ENCODE measurements at regions of chr14 and their contacts with region 1.

Region 1: DNA sequence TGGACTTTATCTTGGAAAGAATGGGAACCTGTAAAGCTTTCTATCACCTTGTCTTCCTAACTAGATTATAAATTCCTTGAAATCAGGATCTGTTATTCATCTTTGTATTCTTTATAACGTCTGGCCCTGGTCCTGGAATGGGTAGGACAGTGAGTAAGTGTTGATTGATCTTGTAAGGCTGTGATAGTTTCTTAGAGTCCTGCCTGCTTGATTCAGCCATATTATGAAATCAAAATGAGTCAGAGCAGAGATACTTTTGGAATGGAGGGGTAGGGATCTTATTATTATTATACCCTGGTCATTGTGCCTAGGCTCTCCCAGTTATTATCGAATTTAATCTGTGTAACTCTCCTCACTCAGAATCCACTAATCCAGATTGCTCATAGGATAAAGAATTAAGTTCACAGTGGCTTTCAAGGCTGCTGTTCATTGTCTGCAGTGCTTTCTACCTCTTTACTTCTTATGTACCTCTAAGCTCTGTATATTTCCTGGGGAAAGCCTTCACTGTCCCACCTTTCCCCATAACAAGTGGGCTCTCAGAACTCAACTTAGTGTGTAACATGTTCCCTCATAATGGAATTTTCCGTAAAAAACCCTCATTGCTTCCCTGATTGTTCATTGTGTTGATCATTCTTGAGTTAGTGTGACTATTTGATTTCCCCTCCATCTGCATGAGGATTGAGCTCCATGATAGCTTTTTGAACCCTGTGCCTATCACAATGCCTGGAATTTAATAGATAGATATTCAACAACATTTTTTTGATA is 93.3 kb downstream of the DAAM1 start:
- DNase-seq: no peak
- H3K4me3 Mint-ChIP-seq: no peak overlapping the region
- H3K27ac Mint-ChIP-seq: peak overlapping the region; percentile 50
- H3K4me1 Mint-ChIP-seq: peaks cover 55% of the 10 kb centered on the region
- H3K27me3 Mint-ChIP-seq: no peaks in the 10 kb centered on the region
- CTCF ChIP-seq: no peak

Region 2: DNA sequence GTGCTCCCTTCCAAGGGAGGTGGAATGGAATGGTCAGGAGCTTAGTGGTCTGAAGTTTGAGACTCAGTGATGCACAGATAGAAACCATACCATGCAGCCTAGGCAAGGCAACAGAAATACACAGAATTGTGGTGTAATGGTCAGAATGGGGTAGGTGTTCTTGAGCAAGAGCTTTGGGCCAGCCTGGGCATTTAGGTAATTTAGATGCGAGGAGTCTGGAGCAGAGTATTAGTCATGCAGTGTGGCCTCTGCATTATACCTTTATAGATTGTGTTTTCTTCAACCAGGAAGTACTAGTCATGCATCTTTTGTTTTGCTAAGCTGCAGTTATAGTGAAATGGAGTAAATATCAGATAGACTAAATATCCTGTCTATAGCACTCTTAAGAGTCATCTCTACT is 25.0 kb after region 1 on chr14:
- CTCF ChIA-PET with region 1: interaction called, 3 read pairs
- intact Hi-C with region 1: loop called (anchors 2 kb)
- DNase-seq: peak; percentile 14
- H3K4me3 Mint-ChIP-seq: no peak overlapping the region
- H3K27ac Mint-ChIP-seq: no peak overlapping the region
- H3K4me1 Mint-ChIP-seq: peaks cover 34% of the 10 kb centered on the region
- H3K27me3 Mint-ChIP-seq: no peaks in the 10 kb centered on the region
- CTCF ChIP-seq: no peak

Region 3: GRCh38 chr14:59360923-59361794 is 79.4 kb after region 1 on chr14:
- CTCF ChIA-PET with region 1: no interaction called
- intact Hi-C with region 1: loop called (anchors 2 kb)
- DNase-seq: peak; percentile 81
- H3K4me3 Mint-ChIP-seq: peak overlapping the region; percentile 55
- H3K27ac Mint-ChIP-seq: peak overlapping the region; percentile 79
- H3K4me1 Mint-ChIP-seq: peaks cover 46% of the 10 kb centered on the region
- H3K27me3 Mint-ChIP-seq: no peaks in the 10 kb centered on the region
- CTCF ChIP-seq: no peak